ENCODE measurements at regions of chr17 and their contacts with region 1.

Region 1: DNA sequence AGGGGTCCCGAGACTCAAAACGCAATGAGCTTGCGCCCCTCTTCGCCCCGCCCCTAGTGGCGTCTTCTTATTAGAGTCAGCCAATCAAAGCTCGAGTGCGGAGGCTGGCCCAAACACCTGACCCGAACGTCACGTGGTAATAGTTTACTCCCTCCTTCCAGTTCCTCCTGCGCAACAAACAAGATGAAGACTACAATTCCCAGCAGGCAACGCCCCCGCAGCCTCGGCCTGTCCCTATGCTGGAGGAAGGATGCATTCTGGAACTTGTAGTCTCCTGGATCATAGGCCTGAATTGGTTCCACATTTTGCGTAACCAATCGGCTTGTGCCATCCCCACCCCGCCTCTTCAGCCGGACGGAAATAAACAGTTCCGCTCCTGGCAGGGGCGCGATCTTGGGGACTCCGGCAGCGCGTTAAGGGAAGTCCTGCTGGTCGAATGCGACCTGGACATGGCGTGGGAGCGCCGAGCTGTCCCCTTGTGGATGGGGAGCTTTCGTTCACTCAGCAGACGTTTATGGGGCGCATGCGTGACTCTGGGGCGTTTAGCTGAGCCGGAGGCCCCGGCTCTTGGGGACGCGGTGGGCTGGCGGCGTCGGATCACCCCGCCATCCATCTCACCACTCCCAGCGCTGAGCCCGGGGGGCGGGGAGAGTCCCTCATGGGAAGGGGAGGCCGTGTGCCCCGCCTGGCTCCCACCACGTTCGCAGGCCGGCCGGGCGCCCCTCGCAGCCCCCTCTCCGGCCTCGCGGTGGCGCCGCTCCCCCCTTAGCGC is at the start of gene WBP2:
- DNase-seq: peak; percentile 98 to 99
- H3K4me3 ChIP-seq: peak within 1 kb of the TSS; percentile 85
- H3K4me3 Mint-ChIP-seq: no peak within 1 kb of the TSS
- H3K27ac Mint-ChIP-seq: no peak within 1 kb of the TSS
- H3K4me1 ChIP-seq: peaks cover 6% of the 10 kb centered on the region
- H3K4me1 Mint-ChIP-seq: peaks cover 12% of the 10 kb centered on the region
- H3K27me3 ChIP-seq: no peaks in the 10 kb centered on the region
- H3K27me3 Mint-ChIP-seq: no peaks in the 10 kb centered on the region
- CTCF ChIP-seq: peak; percentile 11 to 20
- total RNA-seq, gene WBP2: 66.6 and 72.3 TPM in 2 replicates

Region 2: GRCh38 chr17:75632863-75633485 is 222.5 kb before region 1 on chr17 and contains the start of gene SMIM5:
- CTCF ChIA-PET with region 1: interaction called, 16 read pairs
- POLR2A ChIA-PET with region 1: no interaction called
- intact Hi-C with region 1: no loop called
- DNase-seq: peak; percentile 86 to 91
- H3K4me3 ChIP-seq: no peak within 1 kb of the TSS
- H3K4me3 Mint-ChIP-seq: peak within 1 kb of the TSS; percentile 41
- H3K27ac Mint-ChIP-seq: peak within 1 kb of the TSS; percentile 70
- H3K4me1 ChIP-seq: peaks cover 19% of the 10 kb centered on the region
- H3K4me1 Mint-ChIP-seq: peaks cover 9% of the 10 kb centered on the region
- H3K27me3 ChIP-seq: no peaks in the 10 kb centered on the region
- H3K27me3 Mint-ChIP-seq: no peaks in the 10 kb centered on the region
- CTCF ChIP-seq: peak; percentile 95 to 98
- total RNA-seq, gene SMIM5: 0.20 TPM in 1 of 2 replicates, not detected in the other

Region 3: GRCh38 chr17:75784473-75785015 is 71.0 kb before region 1 on chr17 and contains the start of gene UNK:
- CTCF ChIA-PET with region 1: interaction called, 8 read pairs
- POLR2A ChIA-PET with region 1: interaction called, 37 read pairs
- intact Hi-C with region 1: loop called (anchors 1 kb)
- DNase-seq: peak; percentile 98 to 100
- H3K4me3 ChIP-seq: peak within 1 kb of the TSS; percentile 55
- H3K4me3 Mint-ChIP-seq: peak within 1 kb of the TSS; percentile 84
- H3K27ac Mint-ChIP-seq: peak within 1 kb of the TSS; percentile 97
- H3K4me1 ChIP-seq: peaks cover 37% of the 10 kb centered on the region
- H3K4me1 Mint-ChIP-seq: peaks cover 22% of the 10 kb centered on the region
- H3K27me3 ChIP-seq: no peaks in the 10 kb centered on the region
- H3K27me3 Mint-ChIP-seq: peaks cover 3% of the 10 kb centered on the region
- CTCF ChIP-seq: no peak
- total RNA-seq, gene UNK: 31.2 and 33.3 TPM in 2 replicates

Region 4: DNA sequence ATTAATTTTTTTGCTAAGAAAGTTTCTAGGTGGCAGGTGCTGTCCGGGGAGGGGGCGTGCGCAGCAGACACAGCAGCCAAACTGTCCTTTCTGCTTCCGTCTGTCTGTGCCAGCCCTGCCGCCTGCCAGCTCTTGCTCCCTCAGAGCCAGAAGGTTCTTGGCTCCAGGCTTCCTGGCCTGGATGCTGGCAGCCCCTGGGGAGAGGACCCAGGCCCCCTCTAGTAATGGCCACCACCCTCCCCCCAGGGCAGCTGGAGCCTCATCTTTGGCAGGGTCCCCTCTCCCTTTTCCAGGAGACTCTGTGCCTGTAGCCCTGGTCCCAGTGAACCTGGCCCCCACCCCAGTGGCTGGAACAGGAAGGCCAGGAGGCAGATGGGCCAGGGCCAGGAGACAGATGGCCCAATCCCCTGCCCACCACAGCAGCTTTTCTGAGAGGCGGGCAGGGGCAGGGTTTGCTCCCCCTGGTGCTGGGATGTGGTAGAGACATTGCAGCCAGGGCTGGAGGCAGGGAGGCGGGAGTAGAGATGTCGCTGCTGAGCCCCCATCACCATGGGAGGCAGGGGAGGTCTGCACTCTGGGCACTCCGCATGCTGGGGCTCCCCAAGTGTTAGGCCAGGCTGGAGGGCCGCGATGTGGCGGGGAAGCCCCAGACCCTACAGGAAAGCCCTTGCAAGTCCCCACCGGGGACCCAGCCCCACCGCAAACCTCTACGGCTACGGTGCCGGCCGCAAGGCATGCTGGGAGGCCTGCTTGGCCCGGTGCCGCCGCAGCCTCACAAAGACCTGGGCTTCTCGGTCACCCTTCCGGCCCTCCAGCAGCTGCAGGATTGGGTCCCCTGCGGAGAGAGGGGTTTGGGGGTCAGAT is 28.0 kb before region 1 on chr17:
- CTCF ChIA-PET with region 1: interaction called, 11 read pairs
- POLR2A ChIA-PET with region 1: no interaction called
- intact Hi-C with region 1: no loop called
- DNase-seq: peak in 1 of 2 experiments; percentile 77
- H3K4me3 ChIP-seq: no peak overlapping the region
- H3K4me3 Mint-ChIP-seq: no peak overlapping the region
- H3K27ac Mint-ChIP-seq: no peak overlapping the region
- H3K4me1 ChIP-seq: peaks cover 4% of the 10 kb centered on the region; the same call in 1 of the 2 replicates
- H3K4me1 Mint-ChIP-seq: peaks cover 4% of the 10 kb centered on the region
- H3K27me3 ChIP-seq: no peaks in the 10 kb centered on the region
- H3K27me3 Mint-ChIP-seq: no peaks in the 10 kb centered on the region
- CTCF ChIP-seq: peak; percentile 66 to 70

Region 5: DNA sequence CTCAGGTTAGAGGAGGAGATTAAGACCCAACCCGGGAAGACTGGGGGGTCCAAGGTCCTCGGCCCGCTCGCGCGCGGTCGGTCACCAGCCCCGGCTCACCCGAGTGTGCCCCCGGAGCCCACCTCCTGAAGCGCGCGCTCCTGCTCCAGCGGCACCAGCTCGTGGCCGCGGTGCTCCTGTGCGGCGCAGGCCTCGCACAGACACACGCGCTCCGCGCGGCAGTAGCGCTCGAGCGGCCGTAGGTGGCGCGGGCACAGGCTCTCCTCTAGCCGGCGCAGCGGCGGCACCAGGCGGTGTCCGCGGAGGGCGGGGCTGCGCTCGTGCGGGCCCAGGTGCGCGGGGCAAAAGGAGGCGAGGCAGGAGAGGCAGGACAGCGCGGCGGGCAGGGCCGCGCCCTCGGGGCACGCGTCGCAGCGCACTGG is 22.3 kb after region 1 on chr17:
- CTCF ChIA-PET with region 1: interaction called, 34 read pairs
- POLR2A ChIA-PET with region 1: interaction called, 21 read pairs
- intact Hi-C with region 1: no loop called
- DNase-seq: peak; percentile 78 to 88
- H3K4me3 ChIP-seq: peak overlapping the region; percentile 46
- H3K4me3 Mint-ChIP-seq: peak overlapping the region; percentile 70
- H3K27ac Mint-ChIP-seq: no peak overlapping the region
- H3K4me1 ChIP-seq: peaks cover 17% of the 10 kb centered on the region
- H3K4me1 Mint-ChIP-seq: peaks cover 12% of the 10 kb centered on the region
- H3K27me3 ChIP-seq: no peaks in the 10 kb centered on the region; the same call in 1 of the 2 replicates
- H3K27me3 Mint-ChIP-seq: no peaks in the 10 kb centered on the region
- CTCF ChIP-seq: peak; percentile 64 to 68

Region 6: GRCh38 chr17:75904749-75905521 is 49.4 kb after region 1 on chr17 and contains the start of gene MRPL38:
- CTCF ChIA-PET with region 1: no interaction called
- POLR2A ChIA-PET with region 1: interaction called, 3 read pairs
- intact Hi-C with region 1: loop called (anchors 2 kb)
- DNase-seq: peak; percentile 97 to 99
- H3K4me3 ChIP-seq: peak within 1 kb of the TSS; percentile 66
- H3K4me3 Mint-ChIP-seq: peak within 1 kb of the TSS; percentile 99
- H3K27ac Mint-ChIP-seq: peak within 1 kb of the TSS; percentile 92
- H3K4me1 ChIP-seq: peaks cover 22% of the 10 kb centered on the region
- H3K4me1 Mint-ChIP-seq: peaks cover 17% of the 10 kb centered on the region
- H3K27me3 ChIP-seq: no peaks in the 10 kb centered on the region
- H3K27me3 Mint-ChIP-seq: no peaks in the 10 kb centered on the region
- CTCF ChIP-seq: peak; percentile 95
- total RNA-seq, gene MRPL38: 157 and 163 TPM in 2 replicates

Region 7: DNA sequence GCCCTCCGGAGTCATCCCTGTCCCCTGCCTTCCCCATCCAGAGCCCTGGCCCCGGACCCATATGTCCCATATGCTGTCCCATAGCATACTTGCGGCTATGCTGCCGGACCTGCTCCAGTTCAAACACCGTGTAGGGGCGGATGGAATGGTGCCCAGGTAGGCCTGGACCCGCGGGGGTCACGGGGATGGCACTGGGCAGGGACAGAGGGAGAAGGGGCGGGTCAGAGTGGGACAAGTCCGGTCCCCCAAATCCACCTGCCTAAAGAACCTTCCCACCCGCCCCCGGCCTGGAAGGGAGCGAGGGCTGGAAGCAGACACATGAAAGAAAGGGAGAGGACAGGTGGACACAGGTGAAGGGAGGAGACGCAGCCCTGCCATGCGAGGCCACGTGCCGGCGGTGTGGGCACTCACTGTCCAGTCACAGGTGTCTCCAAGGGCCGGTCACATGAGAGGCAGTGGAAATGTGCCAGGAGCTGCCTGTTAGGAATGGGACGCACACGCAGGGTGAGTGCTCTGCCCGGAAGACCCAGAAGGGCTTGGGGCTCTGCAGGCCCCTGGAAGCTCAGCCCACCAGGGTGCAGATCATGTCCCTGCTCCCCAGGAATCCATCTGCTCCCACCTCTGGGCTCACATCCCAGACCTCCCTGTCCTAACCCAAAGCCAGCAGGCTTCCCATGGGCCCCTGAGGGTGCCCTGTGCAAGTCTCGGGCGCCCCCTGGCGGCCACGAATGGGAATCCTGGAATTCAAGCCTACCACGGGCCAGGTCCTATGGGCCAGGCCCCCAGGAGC is 423.7 kb after region 1 on chr17:
- CTCF ChIA-PET with region 1: interaction called, 13 read pairs
- POLR2A ChIA-PET with region 1: no interaction called
- intact Hi-C with region 1: no loop called
- DNase-seq: peak; percentile 87 to 94
- H3K4me3 ChIP-seq: no peak overlapping the region
- H3K4me3 Mint-ChIP-seq: no peak overlapping the region
- H3K27ac Mint-ChIP-seq: no peak overlapping the region
- H3K4me1 ChIP-seq: peaks cover 16% of the 10 kb centered on the region
- H3K4me1 Mint-ChIP-seq: peaks cover 5% of the 10 kb centered on the region
- H3K27me3 ChIP-seq: no peaks in the 10 kb centered on the region
- H3K27me3 Mint-ChIP-seq: no peaks in the 10 kb centered on the region
- CTCF ChIP-seq: peak; percentile 98

Measured in Caco-2 (cell line).